AG04449 (cell line): ENCODE measurements at regions of chr2 and their contacts with region 1.

Region 1: GRCh38 chr2:37877457-37878315 is 47.4 kb upstream of the RMDN2 start:
- DNase-seq: no peak
- H3K4me3 ChIP-seq: no peak overlapping the region
- CTCF ChIP-seq: peak; percentile 38

Region 2: GRCh38 chr2:37332560-37332959 is 545.1 kb before region 1 on chr2:
- CTCF ChIA-PET with region 1: no interaction called
- POLR2A ChIA-PET with region 1: no interaction called
- DNase-seq: no peak
- H3K4me3 ChIP-seq: no peak overlapping the region
- CTCF ChIP-seq: no peak

Region 3: DNA sequence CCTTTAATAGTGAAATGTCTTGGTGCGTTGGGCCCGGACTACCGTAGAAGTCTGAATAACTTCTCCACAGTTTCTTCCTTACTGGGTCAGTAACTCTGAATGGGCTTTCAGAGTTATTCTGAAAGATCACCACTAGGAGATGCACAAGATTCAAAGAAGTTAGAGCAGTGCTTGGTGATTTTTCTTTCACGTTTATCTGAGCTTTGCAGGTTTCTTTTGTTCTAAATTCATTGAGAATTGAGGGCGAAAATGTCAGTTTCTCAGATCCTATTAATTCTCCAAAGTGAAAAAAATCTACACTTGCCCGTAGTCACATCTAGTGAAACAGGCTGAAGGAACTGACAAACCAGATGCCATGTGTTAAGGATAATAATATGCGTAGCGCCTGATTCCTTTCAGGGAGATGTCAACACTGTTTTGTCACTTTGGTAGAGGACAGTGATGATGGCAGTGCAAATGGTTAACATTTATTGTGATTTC is 463.2 kb before region 1 on chr2:
- CTCF ChIA-PET with region 1: interaction called, 177 read pairs
- POLR2A ChIA-PET with region 1: no interaction called
- DNase-seq: no peak
- H3K4me3 ChIP-seq: no peak overlapping the region
- CTCF ChIP-seq: peak; percentile 75

Region 4: GRCh38 chr2:37648331-37649011 is 229.2 kb before region 1 on chr2:
- CTCF ChIA-PET with region 1: interaction called, 40 read pairs
- POLR2A ChIA-PET with region 1: no interaction called
- DNase-seq: no peak
- H3K4me3 ChIP-seq: no peak overlapping the region
- CTCF ChIP-seq: no peak

Region 5: GRCh38 chr2:37740164-37740739 is 137.4 kb before region 1 on chr2:
- CTCF ChIA-PET with region 1: interaction called, 12 read pairs
- POLR2A ChIA-PET with region 1: no interaction called
- DNase-seq: no peak
- H3K4me3 ChIP-seq: no peak overlapping the region
- CTCF ChIP-seq: no peak

Region 6: DNA sequence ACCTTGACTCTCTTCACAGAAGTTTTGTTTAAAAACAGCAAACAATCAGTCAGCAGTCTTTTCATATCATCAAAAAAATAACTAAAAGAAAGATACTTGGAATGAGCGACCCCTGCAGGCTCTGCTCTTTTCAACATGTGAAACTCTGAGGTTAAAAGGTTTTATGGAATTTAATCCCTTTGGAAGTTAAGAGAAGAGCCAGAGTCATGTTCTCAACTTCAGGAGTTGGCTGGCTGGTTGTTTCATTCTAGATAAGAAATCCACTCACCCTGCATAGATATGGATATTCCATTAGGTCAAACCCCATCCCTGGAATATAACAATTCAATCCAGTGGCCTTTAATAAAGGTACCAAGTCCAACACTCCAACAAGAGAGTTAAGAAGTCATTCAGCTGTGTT is 68.2 kb before region 1 on chr2:
- CTCF ChIA-PET with region 1: interaction called, 11 read pairs
- POLR2A ChIA-PET with region 1: no interaction called
- DNase-seq: no peak
- H3K4me3 ChIP-seq: no peak overlapping the region
- CTCF ChIP-seq: peak; percentile 35

Region 7: GRCh38 chr2:37890893-37891495 is 13.3 kb after region 1 on chr2:
- CTCF ChIA-PET with region 1: interaction called, 79 read pairs
- POLR2A ChIA-PET with region 1: no interaction called
- DNase-seq: no peak
- H3K4me3 ChIP-seq: no peak overlapping the region
- CTCF ChIP-seq: peak; percentile 84